H1 (cell line): ENCODE measurements at regions of chr18 and their contacts with region 1.

Region 1: DNA sequence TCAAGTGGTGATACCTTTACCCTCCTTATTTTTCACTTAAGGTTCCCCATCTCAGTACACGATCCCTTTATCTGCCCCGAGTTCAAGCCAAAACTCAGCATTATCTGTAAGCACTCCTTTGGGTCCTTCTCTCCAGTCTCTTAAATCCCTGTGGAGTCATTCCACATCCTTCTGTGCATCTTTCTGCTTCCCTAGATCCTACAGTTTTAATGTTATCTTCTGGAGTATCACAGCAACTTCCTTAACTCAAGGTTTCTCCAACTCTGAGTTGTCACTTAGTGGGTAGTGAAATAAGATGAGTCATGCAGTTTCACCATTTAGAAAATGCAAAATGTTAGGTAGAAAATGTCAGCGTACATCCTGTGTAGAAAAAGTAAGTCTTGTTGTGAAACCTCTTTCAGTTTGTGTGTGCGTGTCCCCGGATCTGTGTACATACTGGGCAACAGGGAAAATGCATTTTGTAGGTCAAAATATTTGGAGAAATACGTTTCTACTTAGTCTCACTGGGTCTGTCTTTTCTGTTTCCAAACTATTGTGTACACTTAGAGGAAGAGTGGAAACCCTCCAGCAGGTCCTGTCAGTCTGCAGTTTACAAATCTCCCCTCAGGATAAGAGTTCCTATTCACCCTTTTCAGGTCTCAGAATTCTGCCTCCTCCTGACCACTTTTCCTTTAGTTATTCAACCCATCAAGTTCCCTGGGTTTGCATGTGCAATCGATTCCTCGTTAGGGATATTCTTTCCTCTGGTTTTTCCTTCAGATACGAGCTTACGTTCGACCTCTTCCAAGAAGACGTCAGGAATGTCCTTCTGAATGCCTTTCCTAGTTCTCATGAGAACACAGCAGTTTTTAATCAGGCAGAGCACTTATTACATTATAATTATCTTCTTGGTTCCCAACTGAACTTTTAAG is 154.8 kb downstream of the TGIF1 start:
- DNase-seq: no peak
- H3K4me3 ChIP-seq: peak overlapping the region; percentile 47 to 91 (median 80)
- H3K27ac ChIP-seq: peak overlapping the region; percentile 87
- H3K4me1 ChIP-seq: peaks cover 5 to 13% (median 9%) of the 10 kb centered on the region in 4 experiments; a peak in 5 of 7 replicates
- H3K27me3 ChIP-seq: no peaks in the 10 kb centered on the region
- CTCF ChIP-seq: no peak
- EP300 ChIP-seq: no peak
- POLR2A ChIP-seq: peak; percentile 4 to 8
- RAD21 ChIP-seq: no peak

Region 2: DNA sequence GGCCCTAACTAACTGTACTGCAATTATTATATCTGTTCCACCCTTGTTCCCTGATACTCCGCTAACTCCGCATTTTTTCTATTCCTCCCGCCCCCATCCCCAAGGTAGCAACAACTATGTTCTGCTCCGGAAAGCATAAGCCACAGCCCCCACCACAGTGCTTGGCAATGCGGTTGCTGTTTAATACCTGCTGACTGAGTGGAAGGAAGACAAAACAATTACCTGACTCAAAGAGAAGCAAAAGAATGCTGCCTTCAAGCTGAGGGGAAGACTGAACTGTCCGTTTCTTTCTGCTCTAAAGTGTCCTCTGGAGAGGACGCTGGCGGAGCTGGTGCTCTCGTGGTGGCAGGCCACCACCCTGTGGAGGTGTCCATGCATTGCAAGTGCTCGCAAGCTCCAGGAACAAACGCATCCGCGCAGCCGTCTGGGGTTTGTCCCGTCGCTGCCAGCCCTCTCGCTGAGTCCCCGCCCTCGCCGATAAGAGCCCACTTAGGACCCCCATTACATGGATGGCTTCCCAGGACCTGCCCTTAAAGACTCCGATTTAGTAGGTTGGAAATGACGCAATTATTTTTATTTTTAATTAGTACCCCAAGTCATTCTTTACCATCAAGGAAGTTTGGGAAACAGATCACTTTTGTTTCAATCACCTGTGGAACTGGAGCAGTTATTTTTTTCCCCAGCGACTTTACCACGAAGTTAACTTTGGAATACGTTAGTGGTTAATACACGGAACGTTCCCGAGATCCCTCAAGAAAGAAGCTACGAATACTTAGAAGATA is 358.7 kb before region 1 on chr18:
- CTCF ChIA-PET with region 1: no interaction called
- POLR2A ChIA-PET with region 1: interaction called, 12 read pairs
- DNase-seq: peak; percentile 81 to 85
- H3K4me3 ChIP-seq: peak overlapping the region; percentile 45 to 91 (median 54); a peak in 7 of 8 replicates
- H3K27ac ChIP-seq: no peak overlapping the region
- H3K4me1 ChIP-seq: peaks cover 0 to 9% (median 1%) of the 10 kb centered on the region in 4 experiments; a peak in 2 of 7 replicates
- H3K27me3 ChIP-seq: no peaks in the 10 kb centered on the region
- CTCF ChIP-seq: peak; percentile 88 to 94 (median 94)
- EP300 ChIP-seq: 0 out of 3 replicates have a peak, but pooled peaks of 1 of the 2 experiments have one; percentile 19
- POLR2A ChIP-seq: peak in 1 of 2 experiments; percentile 49; a peak in 1 of 3 replicates
- RAD21 ChIP-seq: peak; percentile 99 to 100

Region 3: GRCh38 chr18:3297025-3297984 is 307.4 kb before region 1 on chr18:
- CTCF ChIA-PET with region 1: interaction called, 3 read pairs
- POLR2A ChIA-PET with region 1: interaction called, 10 read pairs
- DNase-seq: peak; percentile 96
- H3K4me3 ChIP-seq: peak overlapping the region; percentile 71 to 98 (median 90)
- H3K27ac ChIP-seq: peak overlapping the region; percentile 95
- H3K4me1 ChIP-seq: no peaks in the 10 kb centered on the region
- H3K27me3 ChIP-seq: no peaks in the 10 kb centered on the region
- CTCF ChIP-seq: peak; percentile 75 to 100 (median 92); a peak in 3 of 4 replicates
- EP300 ChIP-seq: peak in 1 of 2 experiments; percentile 64; a peak in 1 of 3 replicates
- POLR2A ChIP-seq: peak; percentile 92 to 99
- RAD21 ChIP-seq: peak; percentile 56 to 58

Region 4: GRCh38 chr18:3420919-3421279 is 183.9 kb before region 1 on chr18:
- CTCF ChIA-PET with region 1: no interaction called
- POLR2A ChIA-PET with region 1: no interaction called
- DNase-seq: no peak
- H3K4me3 ChIP-seq: no peak overlapping the region
- H3K27ac ChIP-seq: no peak overlapping the region
- H3K4me1 ChIP-seq: no peaks in the 10 kb centered on the region
- H3K27me3 ChIP-seq: no peaks in the 10 kb centered on the region
- CTCF ChIP-seq: no peak
- EP300 ChIP-seq: no peak
- POLR2A ChIP-seq: no peak
- RAD21 ChIP-seq: no peak

Region 5: DNA sequence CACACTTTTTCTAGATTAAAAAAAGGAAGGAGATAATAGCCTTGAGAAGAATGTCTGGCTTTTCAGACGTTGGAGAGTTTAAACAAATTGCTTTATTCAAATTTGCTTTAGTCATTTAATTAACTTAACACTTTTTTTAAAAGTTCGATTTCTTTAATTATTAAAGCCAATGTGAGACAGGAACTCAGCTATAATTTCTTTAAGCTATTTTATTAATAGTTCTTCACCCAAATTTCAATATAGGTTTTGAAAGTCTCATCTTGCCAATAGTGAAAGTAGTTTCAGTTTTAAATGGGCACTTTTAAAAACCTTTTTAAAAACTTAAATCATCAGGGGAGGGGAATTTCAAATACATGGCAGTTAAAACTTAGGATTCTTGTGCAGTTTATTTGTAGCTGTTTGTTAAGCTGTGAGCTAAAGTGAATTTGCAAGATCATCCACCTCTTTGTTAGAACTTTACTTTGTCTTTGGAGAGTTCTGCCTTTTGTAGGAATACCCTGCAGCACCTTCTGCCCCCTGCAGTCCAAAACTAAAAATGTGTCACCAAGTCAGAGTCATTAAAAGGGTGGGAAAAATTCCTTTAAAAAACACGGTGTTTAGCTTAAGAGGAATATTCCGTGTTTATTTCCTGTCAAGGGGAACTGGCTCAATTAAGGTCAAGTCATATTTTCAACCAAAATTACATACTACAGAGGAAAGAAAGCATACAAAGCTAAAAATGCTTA is 150.2 kb before region 1 on chr18:
- CTCF ChIA-PET with region 1: interaction called, 19 read pairs
- POLR2A ChIA-PET with region 1: interaction called, 68 read pairs
- DNase-seq: no peak
- H3K4me3 ChIP-seq: peak overlapping the region; percentile 25 to 99 (median 63); a peak in 7 of 8 replicates
- H3K27ac ChIP-seq: peak overlapping the region; percentile 35; the same call in 1 of the 2 replicates
- H3K4me1 ChIP-seq: peaks cover 11 to 25% (median 23%) of the 10 kb centered on the region in 4 experiments; a peak in 6 of 7 replicates
- H3K27me3 ChIP-seq: no peaks in the 10 kb centered on the region
- CTCF ChIP-seq: peak in 2 of 3 experiments; percentile 47 to 67; a peak in 2 of 4 replicates
- EP300 ChIP-seq: no peak
- POLR2A ChIP-seq: peak in 1 of 2 experiments; percentile 36; a peak in 2 of 3 replicates
- RAD21 ChIP-seq: peak; percentile 62 to 65

Region 6: GRCh38 chr18:3525870-3526420 is 78.8 kb before region 1 on chr18:
- CTCF ChIA-PET with region 1: no interaction called
- POLR2A ChIA-PET with region 1: interaction called, 14 read pairs
- DNase-seq: no peak
- H3K4me3 ChIP-seq: no peak overlapping the region
- H3K27ac ChIP-seq: peak overlapping the region; percentile 83
- H3K4me1 ChIP-seq: peaks cover 8 to 24% (median 21%) of the 10 kb centered on the region in 4 experiments
- H3K27me3 ChIP-seq: no peaks in the 10 kb centered on the region
- CTCF ChIP-seq: no peak
- EP300 ChIP-seq: no peak
- POLR2A ChIP-seq: no peak
- RAD21 ChIP-seq: no peak

Region 7: GRCh38 chr18:3593904-3594661 is 10.7 kb before region 1 on chr18:
- CTCF ChIA-PET with region 1: interaction called, 13 read pairs
- POLR2A ChIA-PET with region 1: interaction called, 26 read pairs
- DNase-seq: peak; percentile 77 to 95
- H3K4me3 ChIP-seq: peak overlapping the region; percentile 17 to 53 (median 46); a peak in 6 of 8 replicates
- H3K27ac ChIP-seq: no peak overlapping the region; the same call in 1 of the 2 replicates
- H3K4me1 ChIP-seq: peaks cover 15 to 35% (median 24%) of the 10 kb centered on the region in 4 experiments
- H3K27me3 ChIP-seq: peaks cover 0 to 15% (median 8%) of the 10 kb centered on the region in 4 experiments; a peak in 6 of 7 replicates
- CTCF ChIP-seq: peak; percentile 73 to 89 (median 88)
- EP300 ChIP-seq: no peak
- POLR2A ChIP-seq: no peak
- RAD21 ChIP-seq: peak; percentile 71 to 75

Region 8: GRCh38 chr18:3645384-3646156 is 40.8 kb after region 1 on chr18:
- CTCF ChIA-PET with region 1: interaction called, 4 read pairs
- POLR2A ChIA-PET with region 1: interaction called, 37 read pairs
- DNase-seq: no peak
- H3K4me3 ChIP-seq: no peak overlapping the region
- H3K27ac ChIP-seq: no peak overlapping the region
- H3K4me1 ChIP-seq: peaks cover 0 to 8% (median 3%) of the 10 kb centered on the region in 4 experiments; a peak in 4 of 7 replicates
- H3K27me3 ChIP-seq: no peaks in the 10 kb centered on the region
- CTCF ChIP-seq: no peak
- EP300 ChIP-seq: no peak
- POLR2A ChIP-seq: no peak
- RAD21 ChIP-seq: no peak

Region 9: DNA sequence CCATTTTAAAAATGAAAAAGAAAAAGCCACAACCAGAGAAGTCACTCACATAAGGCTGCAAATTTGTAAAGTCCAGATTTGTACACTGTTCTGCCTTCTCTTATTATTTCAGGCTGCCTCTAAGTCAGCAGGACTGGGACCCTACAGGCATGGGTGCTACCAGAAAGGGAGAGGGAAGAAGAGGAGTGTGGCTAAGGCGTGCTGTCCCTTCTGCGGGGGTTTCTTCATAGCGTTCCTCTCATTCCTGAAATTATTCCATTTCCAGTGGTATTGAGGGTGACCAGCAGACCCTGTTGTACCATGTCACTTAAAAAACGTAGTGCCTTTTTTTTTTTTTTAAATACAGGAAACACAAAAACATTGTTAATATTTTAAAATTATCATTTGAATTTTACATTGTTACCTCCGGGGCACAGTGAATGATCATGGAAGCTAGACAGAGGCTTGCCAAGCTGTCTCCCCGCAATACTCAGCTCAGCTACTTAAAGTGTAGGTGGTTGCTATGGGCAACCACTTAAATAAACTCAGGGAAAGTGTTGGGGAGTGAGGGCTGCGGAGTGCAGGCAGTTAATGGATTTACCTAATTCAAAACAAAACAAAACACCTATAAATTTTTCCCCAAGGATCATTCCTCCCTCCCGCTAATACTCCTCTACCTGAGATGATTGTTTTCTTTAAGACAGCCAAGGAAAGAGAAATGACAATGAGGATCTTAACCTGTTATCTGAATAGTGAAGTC is 194.6 kb after region 1 on chr18:
- CTCF ChIA-PET with region 1: no interaction called
- POLR2A ChIA-PET with region 1: no interaction called
- DNase-seq: no peak
- H3K4me3 ChIP-seq: no peak overlapping the region
- H3K27ac ChIP-seq: 0 out of 2 replicates have a peak overlapping the region, but pooled peaks have one; percentile 27
- H3K4me1 ChIP-seq: peaks cover 0 to 11% (median 1%) of the 10 kb centered on the region in 4 experiments; a peak in 4 of 7 replicates
- H3K27me3 ChIP-seq: no peaks in the 10 kb centered on the region
- CTCF ChIP-seq: no peak
- EP300 ChIP-seq: no peak
- POLR2A ChIP-seq: no peak
- RAD21 ChIP-seq: no peak